OCI-LY7 (cell line): ENCODE measurements at regions of chr3 and their contacts with region 1.

Region 1: GRCh38 chr3:172179680-172180399 is 140.5 kb downstream of the FNDC3B start:
- DNase-seq: no peak
- H3K4me3 ChIP-seq: no peak overlapping the region
- H3K27ac ChIP-seq: no peak overlapping the region
- H3K4me1 ChIP-seq: no peaks in the 10 kb centered on the region
- CTCF ChIP-seq: no peak

Region 2: DNA sequence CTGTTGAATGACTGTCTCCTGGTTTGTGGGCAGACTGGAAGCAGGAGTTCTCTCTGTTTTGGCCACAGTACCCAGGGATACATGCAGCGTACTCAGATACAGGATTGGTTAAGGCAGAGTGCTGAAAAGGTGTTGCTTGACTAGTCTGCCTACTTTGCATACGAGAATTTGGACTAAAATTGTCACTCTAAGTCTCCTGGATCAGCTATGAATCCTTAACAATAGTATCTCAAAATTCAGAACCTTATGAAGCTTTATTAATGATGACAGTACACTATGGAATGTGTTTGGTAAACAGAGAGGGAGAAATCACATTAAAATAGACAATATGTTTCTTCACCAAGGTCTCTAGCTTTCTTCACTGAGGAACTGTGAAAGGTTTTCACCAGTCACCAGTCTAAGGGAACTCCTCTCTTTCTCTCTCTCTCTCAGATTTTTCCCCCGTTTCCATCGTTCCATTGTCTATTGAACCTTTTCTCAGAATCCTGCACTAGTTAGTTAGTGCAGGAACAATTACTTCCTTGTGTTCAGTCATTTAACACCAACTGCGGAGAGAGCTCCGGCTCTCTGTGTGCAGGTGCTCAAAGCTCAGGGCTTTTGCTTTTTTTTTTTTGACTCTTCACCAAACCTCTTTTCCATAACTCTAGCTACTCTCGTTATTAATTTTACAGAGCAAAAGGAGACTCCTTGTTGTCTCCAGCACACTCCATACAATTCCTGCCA is 226.4 kb before region 1 on chr3:
- CTCF ChIA-PET with region 1: interaction called, 10 read pairs
- POLR2A ChIA-PET with region 1: interaction called, 4 read pairs
- intact Hi-C with region 1: no loop called
- DNase-seq: no peak
- H3K4me3 ChIP-seq: no peak overlapping the region
- H3K27ac ChIP-seq: no peak overlapping the region
- H3K4me1 ChIP-seq: no peaks in the 10 kb centered on the region
- CTCF ChIP-seq: no peak